Psoas muscle (tissue), 8 donors: ENCODE measurements at regions of chr2 and their contacts with region 1.

Region 1: GRCh38 chr2:28821295-28821958 is 10.8 kb downstream of the SPDYA start:
- DNase-seq: no peak
- ATAC-seq: peak; percentile 64 to 92 (median 88)
- H3K4me3 ChIP-seq: no peak overlapping the region
- H3K27ac ChIP-seq: no peak overlapping the region
- H3K4me1 ChIP-seq: no peaks in the 10 kb centered on the region
- H3K27me3 ChIP-seq: no peaks in the 10 kb centered on the region
- CTCF ChIP-seq: peak; percentile 70

Region 2: GRCh38 chr2:28855193-28855592 is 33.8 kb after region 1 on chr2:
- intact Hi-C with region 1: no loop called
- DNase-seq: no peak
- ATAC-seq: no peak
- H3K4me3 ChIP-seq: no peak overlapping the region
- H3K27ac ChIP-seq: no peak overlapping the region
- H3K4me1 ChIP-seq: no peaks in the 10 kb centered on the region
- H3K27me3 ChIP-seq: no peaks in the 10 kb centered on the region
- CTCF ChIP-seq: no peak

Region 3: DNA sequence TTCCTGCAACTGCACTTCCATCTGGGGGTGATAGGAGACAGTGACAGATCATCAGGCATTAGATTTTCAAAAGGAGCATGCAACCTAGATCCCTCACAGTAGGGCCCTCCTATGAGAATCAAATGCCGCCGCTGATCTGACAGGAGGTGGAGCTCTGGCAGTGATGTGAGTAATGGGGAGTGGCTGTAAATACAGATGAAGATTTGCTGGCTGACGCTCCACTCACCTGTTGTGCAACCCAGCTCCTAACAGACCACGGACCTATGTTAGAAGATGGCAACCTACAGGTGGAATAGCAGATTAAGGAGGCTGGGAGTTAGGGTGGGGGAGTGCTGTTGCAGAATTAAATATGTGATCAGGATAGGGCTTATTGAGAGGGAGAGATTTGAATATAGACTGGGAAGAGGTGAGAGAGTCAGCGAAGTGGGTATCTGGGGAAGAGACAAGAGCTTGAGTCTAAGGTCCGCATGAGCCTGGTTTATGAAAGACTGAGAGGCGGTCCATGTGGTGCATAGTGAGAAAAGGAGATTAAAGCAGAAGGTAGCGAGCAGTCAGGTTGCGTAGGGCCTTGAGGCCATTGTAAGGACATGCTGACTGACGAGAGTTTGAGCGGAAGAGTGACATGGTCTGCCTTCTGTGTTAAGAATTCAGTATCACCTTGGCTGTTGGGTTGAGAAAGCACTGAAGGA is 128.3 kb after region 1 on chr2:
- intact Hi-C with region 1: loop called in 1 of 2 experiments (anchors 5 kb)
- DNase-seq: no peak
- ATAC-seq: no peak
- H3K4me3 ChIP-seq: no peak overlapping the region
- H3K27ac ChIP-seq: no peak overlapping the region
- H3K4me1 ChIP-seq: peaks cover 23% of the 10 kb centered on the region
- H3K27me3 ChIP-seq: no peaks in the 10 kb centered on the region
- CTCF ChIP-seq: no peak

Region 4: DNA sequence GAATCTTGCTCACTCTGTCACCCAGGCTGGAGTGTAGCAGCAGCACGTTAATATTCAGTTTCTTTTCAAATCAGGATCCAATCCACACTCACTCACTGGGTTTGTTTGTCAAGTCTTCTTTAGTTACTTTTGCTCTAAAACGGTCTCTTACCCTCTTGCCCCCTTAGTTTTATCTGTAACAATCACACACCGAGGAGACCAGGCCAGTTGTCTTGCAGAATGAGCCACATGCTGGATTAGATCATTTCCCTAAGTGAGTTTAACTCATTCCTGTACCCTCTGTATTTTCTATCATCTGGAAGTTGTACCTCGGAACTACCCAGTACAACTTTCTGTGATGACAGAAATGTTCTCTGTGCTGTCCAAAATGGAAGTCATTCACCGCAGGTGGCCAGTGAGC is 139.0 kb after region 1 on chr2:
- intact Hi-C with region 1: no loop called
- DNase-seq: no peak
- ATAC-seq: peak in 3 of 4 donors; percentile 16 to 35 (median 27)
- H3K4me3 ChIP-seq: no peak overlapping the region
- H3K27ac ChIP-seq: peak overlapping the region; percentile 20
- H3K4me1 ChIP-seq: peaks cover 5% of the 10 kb centered on the region
- H3K27me3 ChIP-seq: no peaks in the 10 kb centered on the region
- CTCF ChIP-seq: no peak